ENCODE measurements at regions of chr17 and their contacts with region 1.

Region 1: DNA sequence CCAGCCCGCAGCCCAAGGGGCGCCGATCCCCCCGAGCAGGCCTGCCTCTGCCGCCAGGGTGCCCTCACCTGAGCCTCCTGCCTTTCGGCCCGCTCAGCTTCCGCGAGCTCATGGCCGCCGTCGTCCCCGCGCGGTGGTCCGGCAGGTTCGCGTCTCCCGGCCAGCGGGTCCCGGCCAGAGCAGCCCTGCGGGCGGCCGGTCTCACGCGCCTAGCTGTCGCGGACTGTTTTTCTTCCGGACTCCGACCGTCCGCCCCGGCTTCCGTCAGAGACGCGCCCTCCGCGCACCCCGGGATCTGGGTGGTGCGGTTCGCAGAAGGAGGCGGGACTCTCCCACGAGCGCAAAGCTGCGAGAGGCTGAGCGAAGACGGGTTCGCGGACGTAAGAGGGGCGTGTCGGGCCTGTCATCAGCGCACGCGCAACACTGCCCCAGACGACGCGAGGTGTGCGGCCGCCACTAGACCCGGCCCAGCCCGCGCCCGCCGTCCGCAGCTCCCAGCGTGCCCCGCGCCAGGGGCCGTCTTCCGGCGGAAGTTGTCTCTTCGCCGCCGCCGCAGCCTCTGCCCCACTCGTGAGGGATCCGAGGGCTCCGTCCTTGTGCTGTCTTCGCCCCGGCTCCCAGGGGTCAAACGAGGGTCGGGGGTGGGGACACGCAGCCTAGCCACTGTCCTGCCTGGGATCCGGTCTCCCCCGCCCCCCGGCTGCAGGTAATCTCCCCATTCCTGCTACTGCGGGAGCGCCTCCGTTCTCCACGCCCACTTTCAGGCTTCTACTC is at the start of gene INPP5K:
- DNase-seq: peak; percentile 99
- ATAC-seq: peak; percentile 97
- total RNA-seq, gene INPP5K: 32.9 TPM

Region 2: GRCh38 chr17:1275962-1276736 is 240.4 kb before region 1 on chr17:
- intact Hi-C with region 1: loop called (anchors 5 kb)
- DNase-seq: peak; percentile 81
- ATAC-seq: peak; percentile 78

Region 3: DNA sequence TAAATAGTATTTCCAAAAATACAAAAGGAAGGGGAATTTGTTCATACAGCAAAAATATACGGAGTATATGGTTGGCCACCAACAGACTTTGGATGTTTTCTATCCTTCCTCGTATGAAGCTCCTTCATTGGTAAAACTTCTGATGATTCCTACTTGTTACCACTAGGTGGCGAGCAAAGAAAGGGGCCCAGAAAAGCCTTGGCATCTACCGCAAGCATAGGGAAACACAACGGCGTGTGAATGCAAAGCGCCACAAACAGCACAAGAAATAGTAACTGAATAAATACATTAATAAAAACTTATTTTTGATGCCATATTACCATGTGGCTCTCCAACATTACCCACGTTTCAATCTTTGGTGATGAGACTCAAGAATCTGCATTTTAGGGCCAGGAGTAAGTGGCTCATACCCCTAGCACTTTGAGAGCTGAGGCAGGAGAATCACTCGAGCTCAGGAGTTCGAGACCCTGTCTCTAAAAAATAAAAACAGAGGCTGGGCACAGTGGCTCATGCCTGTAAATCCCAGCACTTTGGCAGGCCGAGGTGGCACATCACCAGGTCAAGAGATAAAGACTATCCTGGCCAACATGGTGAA is 151.0 kb before region 1 on chr17:
- intact Hi-C with region 1: loop called (anchors 5 kb)
- DNase-seq: no peak
- ATAC-seq: peak; percentile 78

Region 4: GRCh38 chr17:1455797-1456599 is 60.6 kb before region 1 on chr17 and contains the start of gene CRK:
- intact Hi-C with region 1: loop called (anchors 2 kb)
- DNase-seq: peak; percentile 98
- ATAC-seq: peak; percentile 93
- total RNA-seq, gene CRK: 36.0 TPM

Measured in Right ventricle myocardium superior (tissue), 1 donor.